OCI-LY7 (cell line): ENCODE measurements at regions of chr2 and their contacts with region 1.

Region 1: DNA sequence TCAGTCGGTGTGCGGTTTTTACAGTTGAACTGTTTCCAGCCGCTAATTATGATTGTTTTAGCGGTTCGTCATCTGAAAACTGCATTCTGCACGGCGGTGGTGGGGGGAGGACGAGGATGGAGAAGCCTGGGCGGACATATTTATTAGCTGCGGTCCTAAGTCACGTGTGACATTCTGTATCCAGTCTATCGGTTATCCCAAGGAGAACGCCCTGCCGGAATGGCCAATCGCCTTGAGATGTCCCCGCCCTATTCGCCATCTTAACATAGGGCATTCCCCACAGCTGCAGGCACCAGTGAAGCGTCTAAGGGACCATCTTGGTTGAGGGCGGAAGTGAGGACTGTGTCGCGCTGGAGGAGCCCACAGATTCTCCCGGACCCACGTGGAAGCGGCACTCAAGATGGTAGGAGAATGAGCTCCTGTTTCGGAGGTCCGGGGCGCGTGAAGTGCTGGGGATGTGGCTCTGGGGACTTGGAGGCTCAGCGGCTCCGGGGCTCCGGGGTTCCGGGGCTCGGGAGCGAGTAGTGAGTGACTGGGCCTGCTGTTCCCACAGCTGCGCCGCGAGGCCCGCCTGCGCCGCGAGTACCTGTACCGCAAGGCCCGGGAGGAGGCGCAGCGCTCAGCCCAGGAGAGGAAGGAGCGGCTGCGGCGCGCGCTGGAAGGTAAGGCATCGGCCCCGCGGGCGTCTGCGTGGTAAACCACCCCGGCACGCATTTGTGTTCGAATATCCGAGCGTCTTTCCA is at the start of gene IMP4:
- DNase-seq: peak; percentile 99
- H3K4me3 ChIP-seq: peak within 1 kb of the TSS; percentile 97
- H3K27ac ChIP-seq: peak within 1 kb of the TSS; percentile 96
- H3K4me1 ChIP-seq: peaks cover 50% of the 10 kb centered on the region
- CTCF ChIP-seq: peak; percentile 56
- total RNA-seq, gene IMP4: 265 and 266 TPM in 2 replicates

Region 2: DNA sequence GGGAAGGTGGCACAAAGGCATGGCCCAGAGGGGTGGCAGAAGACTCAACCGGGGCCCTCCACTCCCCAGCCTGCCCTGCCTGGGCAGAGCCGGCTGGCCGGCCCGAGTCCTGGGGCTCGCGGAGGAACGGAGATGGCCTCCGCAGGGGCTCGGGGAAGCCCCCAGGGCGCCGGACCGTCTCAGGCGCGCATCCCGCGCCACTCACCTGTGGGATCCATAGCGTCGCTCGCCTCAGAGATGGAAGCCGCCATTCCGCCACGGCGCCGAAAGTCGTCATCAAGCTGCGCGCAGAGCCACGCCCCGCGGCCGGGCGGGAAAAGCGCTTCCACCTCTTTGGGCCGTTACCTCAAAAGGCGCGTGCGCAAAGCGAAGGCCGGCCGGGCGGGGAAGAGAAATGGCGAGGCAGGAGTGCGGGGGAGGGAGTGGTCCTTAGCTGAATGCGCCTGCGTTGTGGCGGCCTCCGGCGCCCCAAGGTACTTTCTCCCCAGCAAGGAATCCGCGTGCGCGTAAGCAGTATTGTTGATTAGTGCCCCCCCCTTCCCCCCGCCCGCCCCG is 161.3 kb before region 1 on chr2 and contains the start of gene SMPD4:
- CTCF ChIA-PET with region 1: interaction called, 3 read pairs
- POLR2A ChIA-PET with region 1: interaction called, 4 read pairs
- intact Hi-C with region 1: loop called (anchors 2 kb)
- DNase-seq: peak; percentile 96
- H3K4me3 ChIP-seq: peak within 1 kb of the TSS; percentile 96
- H3K27ac ChIP-seq: peak within 1 kb of the TSS; percentile 76
- H3K4me1 ChIP-seq: peaks cover 21% of the 10 kb centered on the region
- CTCF ChIP-seq: no peak
- total RNA-seq, gene SMPD4: 52.0 and 61.9 TPM in 2 replicates

Region 3: GRCh38 chr2:130252880-130253645 is 89.6 kb before region 1 on chr2:
- CTCF ChIA-PET with region 1: no interaction called
- POLR2A ChIA-PET with region 1: no interaction called
- intact Hi-C with region 1: no loop called
- DNase-seq: no peak
- H3K4me3 ChIP-seq: no peak overlapping the region
- H3K27ac ChIP-seq: no peak overlapping the region
- H3K4me1 ChIP-seq: no peaks in the 10 kb centered on the region
- CTCF ChIP-seq: no peak

Region 4: GRCh38 chr2:130303169-130303568 is 39.5 kb before region 1 on chr2:
- CTCF ChIA-PET with region 1: no interaction called
- POLR2A ChIA-PET with region 1: no interaction called
- intact Hi-C with region 1: no loop called
- DNase-seq: no peak
- H3K4me3 ChIP-seq: no peak overlapping the region
- H3K27ac ChIP-seq: no peak overlapping the region
- H3K4me1 ChIP-seq: no peaks in the 10 kb centered on the region
- CTCF ChIP-seq: no peak

Region 5: DNA sequence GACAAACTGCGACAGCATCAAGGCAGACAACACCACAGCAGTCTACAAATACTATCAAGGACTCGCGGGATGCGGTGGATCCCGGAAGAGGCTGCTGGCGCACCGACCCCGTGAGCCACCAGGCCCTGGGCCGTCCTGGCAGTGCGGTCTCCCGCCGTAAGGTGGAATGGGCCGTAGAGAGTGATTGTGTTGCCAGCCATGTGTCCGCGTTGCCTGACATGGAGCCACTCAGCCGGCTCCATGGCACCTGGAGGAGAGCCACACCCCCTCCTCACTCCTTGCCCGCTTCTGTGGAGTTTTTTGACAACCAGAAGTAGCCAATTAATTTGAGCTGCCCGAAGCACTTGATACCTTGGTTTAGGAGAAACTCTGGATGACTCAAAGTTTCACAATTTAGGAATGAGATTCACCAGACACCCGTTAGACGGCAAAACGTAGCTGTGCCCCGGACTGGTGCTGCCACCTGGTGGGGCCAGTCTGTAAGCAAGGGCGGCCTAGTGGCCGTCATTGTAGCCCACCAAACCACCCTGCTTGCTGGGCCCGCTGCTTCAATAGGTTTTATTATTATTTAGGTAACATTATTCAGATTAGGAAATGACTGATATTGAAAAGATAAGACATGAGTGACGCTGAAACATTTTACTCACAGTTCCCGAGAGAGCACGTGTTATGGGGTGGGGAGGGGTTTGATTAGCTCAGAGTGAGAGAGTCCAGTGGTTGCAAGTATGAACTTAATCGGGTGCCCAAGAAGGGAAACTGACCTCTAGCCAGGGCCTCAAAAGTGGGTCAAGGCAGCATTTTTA is 10.2 kb before region 1 on chr2:
- CTCF ChIA-PET with region 1: no interaction called
- POLR2A ChIA-PET with region 1: interaction called, 13 read pairs
- intact Hi-C with region 1: no loop called
- DNase-seq: peak; percentile 78
- H3K4me3 ChIP-seq: no peak overlapping the region
- H3K27ac ChIP-seq: no peak overlapping the region
- H3K4me1 ChIP-seq: no peaks in the 10 kb centered on the region
- CTCF ChIP-seq: peak; percentile 98

Region 6: DNA sequence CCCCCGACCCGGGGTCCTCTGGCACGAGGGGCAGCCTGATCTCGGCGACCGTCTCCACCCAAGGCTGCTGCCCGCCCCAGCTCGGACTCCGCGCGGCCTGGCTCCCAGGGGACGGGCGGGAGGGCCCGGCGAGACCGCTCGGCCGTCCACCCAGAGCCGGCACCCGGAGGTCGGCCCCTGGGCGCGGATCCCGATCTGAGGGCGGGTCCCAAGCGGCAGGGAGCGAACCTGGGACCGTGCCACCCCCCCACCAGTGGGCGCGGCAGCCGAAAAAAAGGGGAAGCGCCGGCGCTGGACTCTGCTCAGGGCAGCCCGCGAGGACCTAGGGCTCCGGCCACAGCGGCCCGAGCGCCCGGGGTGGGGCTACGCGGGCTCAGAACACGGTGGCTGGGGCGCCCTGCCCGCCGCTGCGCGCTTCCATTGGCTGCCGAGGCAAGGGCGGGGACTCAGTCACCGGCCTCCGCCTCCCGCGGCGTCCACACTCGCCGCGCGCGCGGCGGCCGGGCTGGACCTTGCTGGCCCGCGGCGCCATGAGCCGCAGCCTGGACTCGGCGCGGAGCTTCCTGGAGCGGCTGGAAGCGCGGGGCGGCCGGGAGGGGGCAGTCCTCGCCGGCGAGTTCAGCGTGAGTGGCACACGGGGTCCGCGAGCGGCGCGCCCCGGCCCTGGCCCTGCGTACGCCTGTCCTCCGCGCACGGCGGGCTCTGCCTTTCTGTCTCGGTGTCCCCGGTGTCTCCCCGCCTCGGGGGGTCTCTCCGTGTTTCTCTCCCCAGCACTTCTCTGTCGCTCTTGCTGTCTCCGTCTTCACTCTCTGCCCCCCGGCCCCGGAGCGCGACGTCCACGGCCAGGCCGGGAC is 13.1 kb after region 1 on chr2 and contains the start of gene PTPN18:
- CTCF ChIA-PET with region 1: interaction called, 5 read pairs
- POLR2A ChIA-PET with region 1: interaction called, 93 read pairs
- intact Hi-C with region 1: no loop called
- DNase-seq: peak; percentile 68
- H3K4me3 ChIP-seq: peak within 1 kb of the TSS; percentile 75
- H3K27ac ChIP-seq: peak within 1 kb of the TSS; percentile 97
- H3K4me1 ChIP-seq: peaks cover 50% of the 10 kb centered on the region
- CTCF ChIP-seq: peak; percentile 54
- total RNA-seq, gene PTPN18: 96.6 and 107 TPM in 2 replicates

Region 7: GRCh38 chr2:130372055-130372832 is 29.5 kb after region 1 on chr2:
- CTCF ChIA-PET with region 1: interaction called, 6 read pairs
- POLR2A ChIA-PET with region 1: interaction called, 251 read pairs
- intact Hi-C with region 1: loop called (anchors 1 kb)
- DNase-seq: peak; percentile 89
- H3K4me3 ChIP-seq: peak overlapping the region; percentile 93
- H3K27ac ChIP-seq: peak overlapping the region; percentile 90
- H3K4me1 ChIP-seq: peaks cover 70% of the 10 kb centered on the region
- CTCF ChIP-seq: peak; percentile 81

Region 8: DNA sequence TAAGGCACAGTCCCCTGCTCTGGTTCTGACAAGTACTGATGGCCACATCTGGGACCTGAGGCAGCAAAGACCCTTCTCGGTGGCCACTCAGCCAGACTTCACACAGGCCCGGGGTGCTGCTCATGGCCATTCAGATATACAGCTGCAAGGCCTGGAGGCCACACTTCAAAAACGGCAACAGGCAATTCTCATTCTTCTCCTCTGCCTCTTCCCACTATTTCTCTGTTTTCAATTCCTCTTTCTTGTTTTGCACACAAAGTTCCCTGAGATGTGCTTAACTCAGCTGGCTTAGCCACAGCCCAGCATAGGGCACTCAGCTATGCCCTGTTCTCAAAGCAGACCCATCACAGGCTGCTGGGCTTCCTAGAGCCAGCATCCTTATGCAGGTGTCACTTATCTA is 43.0 kb after region 1 on chr2:
- CTCF ChIA-PET with region 1: interaction called, 6 read pairs
- POLR2A ChIA-PET with region 1: interaction called, 159 read pairs
- intact Hi-C with region 1: loop called (anchors 1 kb)
- DNase-seq: peak; percentile 84
- H3K4me3 ChIP-seq: peak overlapping the region; percentile 21
- H3K27ac ChIP-seq: peak overlapping the region; percentile 100
- H3K4me1 ChIP-seq: peaks cover 90% of the 10 kb centered on the region
- CTCF ChIP-seq: no peak

Region 9: GRCh38 chr2:130391058-130391871 is 48.6 kb after region 1 on chr2:
- CTCF ChIA-PET with region 1: interaction called, 6 read pairs
- POLR2A ChIA-PET with region 1: interaction called, 159 read pairs
- intact Hi-C with region 1: loop called (anchors 1 kb)
- DNase-seq: peak; percentile 76
- H3K4me3 ChIP-seq: peak overlapping the region; percentile 61
- H3K27ac ChIP-seq: peak overlapping the region; percentile 100
- H3K4me1 ChIP-seq: peaks cover 73% of the 10 kb centered on the region
- CTCF ChIP-seq: no peak